Activated CD8-positive, alpha-beta T cell treated with anti-CD3 and anti-CD28 coated beads for 36 hours (primary cell): ENCODE measurements at regions of chr3 and their contacts with region 1.

Region 1: DNA sequence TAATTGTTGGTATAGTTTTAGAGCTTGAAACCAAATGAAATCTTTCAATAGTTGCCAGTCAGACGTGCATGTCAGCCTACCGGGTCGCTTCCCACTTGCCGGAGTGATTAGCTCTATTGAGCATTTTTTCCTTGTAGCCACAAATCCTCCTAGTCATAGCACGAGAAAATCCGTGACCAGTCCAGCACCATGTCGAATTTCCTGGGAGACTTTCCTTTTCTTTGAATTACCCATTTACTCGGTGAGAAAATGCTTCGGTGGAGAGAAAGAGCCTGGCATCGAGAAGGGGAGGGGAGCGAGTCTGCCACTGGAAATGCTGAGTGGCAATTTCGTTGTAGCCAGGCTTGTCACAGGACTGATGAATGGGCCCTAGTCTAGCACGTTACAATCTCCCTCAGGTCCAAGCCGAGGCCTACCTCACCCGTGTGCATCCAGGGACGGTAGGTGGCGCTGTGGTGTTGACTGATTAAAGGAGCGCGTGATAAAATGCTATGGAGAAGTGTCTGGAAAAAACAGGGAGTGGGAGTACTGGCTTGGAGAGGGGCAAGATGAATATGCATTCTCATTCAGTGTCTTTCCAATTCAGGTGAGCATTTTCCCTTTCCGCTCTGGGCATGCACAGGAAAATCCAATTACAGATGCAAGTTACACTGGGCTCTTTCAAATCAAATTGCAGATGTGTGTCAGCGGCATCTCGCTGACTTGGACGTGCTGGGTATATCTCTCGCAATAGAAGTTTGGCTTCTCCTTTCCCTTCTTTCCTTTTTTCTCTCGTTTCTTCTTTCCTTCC is 238.8 kb downstream of the EDEM1 start:
- DNase-seq: peak; percentile 83
- ATAC-seq: peak; percentile 89
- H3K4me3 Mint-ChIP-seq: no peak overlapping the region
- H3K27ac Mint-ChIP-seq: no peak overlapping the region
- H3K4me1 Mint-ChIP-seq: peaks cover 5% of the 10 kb centered on the region
- H3K27me3 Mint-ChIP-seq: peaks cover 6% of the 10 kb centered on the region
- CTCF ChIP-seq: peak; percentile 90

Region 2: DNA sequence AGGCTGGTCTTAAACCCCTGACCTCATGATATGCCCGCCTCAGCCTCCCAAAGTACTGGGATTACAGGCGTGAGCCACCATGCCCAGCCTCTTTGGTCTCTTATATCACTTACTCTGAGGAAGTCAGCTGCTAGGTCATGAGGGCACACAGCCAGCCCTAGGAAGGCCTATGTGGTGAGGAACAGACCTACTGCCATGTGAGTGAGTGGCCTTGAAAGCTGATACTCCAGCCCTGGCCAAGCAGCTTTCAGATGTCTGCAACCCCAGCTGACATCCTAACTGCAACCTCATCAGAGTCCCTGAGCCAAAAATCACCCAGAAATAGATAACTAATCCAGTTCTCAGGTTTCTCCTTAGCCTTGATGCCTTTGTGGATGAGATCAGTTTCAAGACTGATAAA is 14.5 kb before region 1 on chr3:
- CTCF ChIA-PET with region 1: interaction called, 11 read pairs
- POLR2A ChIA-PET with region 1: no interaction called
- intact Hi-C with region 1: no loop called
- DNase-seq: no peak
- ATAC-seq: no peak
- H3K4me3 Mint-ChIP-seq: no peak overlapping the region
- H3K27ac Mint-ChIP-seq: no peak overlapping the region
- H3K4me1 Mint-ChIP-seq: no peaks in the 10 kb centered on the region
- H3K27me3 Mint-ChIP-seq: peaks cover under 1% of the 10 kb centered on the region
- CTCF ChIP-seq: no peak